Endothelial cell of umbilical vein (primary cell): ENCODE measurements at regions of chr15 and their contacts with region 1.

Region 1: GRCh38 chr15:51093839-51094605 is 684 bp downstream of the TNFAIP8L3 start:
- DNase-seq: peak; percentile 59
- H3K4me3 ChIP-seq: peak overlapping the region; percentile 75 to 95 (median 91)
- H3K27ac ChIP-seq: peak overlapping the region; percentile 61
- H3K4me1 ChIP-seq: peaks cover 78% of the 10 kb centered on the region
- H3K27me3 ChIP-seq: no peaks in the 10 kb centered on the region
- CTCF ChIP-seq: no peak
- POLR2A ChIP-seq: peak; percentile 38

Region 2: DNA sequence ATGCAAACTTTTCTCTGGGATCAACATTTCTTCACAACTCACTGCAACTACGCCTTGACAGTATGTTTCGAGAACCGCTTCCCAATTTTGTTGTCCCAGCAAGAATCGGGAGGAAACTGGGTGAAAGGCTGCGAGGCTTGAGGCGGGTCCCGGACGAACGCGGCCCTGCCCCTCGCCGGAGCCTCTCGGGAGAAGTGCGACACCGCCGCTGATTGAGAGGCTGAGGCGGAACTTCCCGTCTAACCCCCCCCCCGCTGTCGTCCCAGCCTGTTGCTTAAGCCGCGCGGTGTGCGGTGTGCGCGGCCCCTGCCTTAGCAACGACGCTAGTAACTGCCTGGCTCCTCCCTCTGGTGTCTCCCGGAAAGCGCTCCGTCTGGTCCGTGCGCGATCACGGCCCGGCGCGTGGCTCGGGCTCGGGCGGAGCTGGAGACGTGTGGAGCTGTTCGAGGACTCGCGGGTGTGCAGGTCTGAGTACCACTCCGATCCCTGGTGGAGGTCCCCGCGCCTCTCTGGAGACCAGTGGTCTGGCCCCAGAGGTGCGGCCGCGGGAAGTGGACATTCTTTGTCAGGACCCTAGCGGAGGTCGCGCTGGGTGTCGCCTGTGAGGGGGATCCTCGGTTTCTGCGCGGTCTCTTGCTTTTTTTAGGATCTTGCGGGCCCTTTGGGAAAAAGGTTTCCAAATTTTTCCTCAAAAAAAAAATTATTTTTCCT is 1473.2 kb before region 1 on chr15 and contains the starts of genes DTWD1 and FAM227B:
- CTCF ChIA-PET with region 1: no interaction called
- POLR2A ChIA-PET with region 1: no interaction called
- dilution Hi-C with region 1: no loop called
- intact Hi-C with region 1: loop called (anchors 10 kb)
- DNase-seq: peak; percentile 98
- H3K4me3 ChIP-seq: peak within 1 kb of the TSS; percentile 79 to 95 (median 91)
- H3K27ac ChIP-seq: peak within 1 kb of the TSS; percentile 64
- H3K4me1 ChIP-seq: peaks cover 11% of the 10 kb centered on the region
- H3K27me3 ChIP-seq: no peaks in the 10 kb centered on the region
- CTCF ChIP-seq: no peak
- POLR2A ChIP-seq: peak; percentile 88
- total RNA-seq, gene DTWD1: 18.7 and 20.1 TPM in 2 replicates
- total RNA-seq, gene FAM227B: 1.5 and 1.8 TPM in 2 replicates

Region 3: DNA sequence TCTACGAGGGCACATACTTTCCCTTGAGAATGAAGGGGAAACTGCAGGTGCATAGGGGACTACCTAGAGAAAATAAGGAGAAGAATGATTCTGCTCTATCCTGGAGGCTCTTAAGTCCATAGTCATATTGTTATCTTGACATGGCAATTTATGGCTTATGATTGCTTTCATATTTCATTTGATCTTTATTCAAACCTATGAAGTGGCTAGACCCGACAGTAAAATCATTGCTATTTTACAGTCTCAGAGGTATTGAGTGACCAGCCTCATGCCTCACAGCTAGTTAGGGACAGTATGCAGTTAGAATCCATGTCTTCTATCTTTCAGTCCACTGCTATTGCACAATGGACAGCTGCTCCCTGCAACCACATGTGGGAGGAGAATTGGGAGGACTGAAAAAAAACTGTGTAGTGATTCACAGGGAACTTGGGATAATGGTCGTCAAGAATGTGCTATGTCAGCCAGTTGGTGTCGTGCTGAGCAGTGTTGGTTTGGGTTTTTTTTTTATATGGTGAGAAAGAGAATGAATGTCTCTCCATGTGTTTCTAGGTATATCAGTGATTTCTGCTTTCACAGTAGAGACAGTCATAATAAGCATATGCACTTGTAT is 265.3 kb before region 1 on chr15:
- CTCF ChIA-PET with region 1: no interaction called
- POLR2A ChIA-PET with region 1: no interaction called
- dilution Hi-C with region 1: no loop called
- intact Hi-C with region 1: no loop called
- DNase-seq: no peak
- H3K4me3 ChIP-seq: no peak overlapping the region
- H3K27ac ChIP-seq: no peak overlapping the region
- H3K4me1 ChIP-seq: no peaks in the 10 kb centered on the region
- H3K27me3 ChIP-seq: peaks cover 3 to 4% of the 10 kb centered on the region in 2 experiments
- CTCF ChIP-seq: no peak
- POLR2A ChIP-seq: no peak

Region 4: GRCh38 chr15:50979041-50979440 is 115.0 kb before region 1 on chr15:
- CTCF ChIA-PET with region 1: no interaction called
- POLR2A ChIA-PET with region 1: no interaction called
- dilution Hi-C with region 1: no loop called
- intact Hi-C with region 1: no loop called
- DNase-seq: no peak
- H3K4me3 ChIP-seq: no peak overlapping the region
- H3K27ac ChIP-seq: no peak overlapping the region
- H3K4me1 ChIP-seq: no peaks in the 10 kb centered on the region
- H3K27me3 ChIP-seq: no peaks in the 10 kb centered on the region
- CTCF ChIP-seq: no peak
- POLR2A ChIP-seq: no peak

Region 5: GRCh38 chr15:51077221-51078153 is 16.5 kb before region 1 on chr15:
- CTCF ChIA-PET with region 1: interaction called, 3 read pairs
- POLR2A ChIA-PET with region 1: interaction called, 4 read pairs
- dilution Hi-C with region 1: no loop called
- intact Hi-C with region 1: loop called (anchors 1 kb)
- DNase-seq: peak; percentile 62
- H3K4me3 ChIP-seq: peak overlapping the region in 1 of 3 experiments; percentile 20
- H3K27ac ChIP-seq: peak overlapping the region; percentile 62
- H3K4me1 ChIP-seq: peaks cover 3% of the 10 kb centered on the region
- H3K27me3 ChIP-seq: no peaks in the 10 kb centered on the region
- CTCF ChIP-seq: no peak
- POLR2A ChIP-seq: peak; percentile 50

Region 6: DNA sequence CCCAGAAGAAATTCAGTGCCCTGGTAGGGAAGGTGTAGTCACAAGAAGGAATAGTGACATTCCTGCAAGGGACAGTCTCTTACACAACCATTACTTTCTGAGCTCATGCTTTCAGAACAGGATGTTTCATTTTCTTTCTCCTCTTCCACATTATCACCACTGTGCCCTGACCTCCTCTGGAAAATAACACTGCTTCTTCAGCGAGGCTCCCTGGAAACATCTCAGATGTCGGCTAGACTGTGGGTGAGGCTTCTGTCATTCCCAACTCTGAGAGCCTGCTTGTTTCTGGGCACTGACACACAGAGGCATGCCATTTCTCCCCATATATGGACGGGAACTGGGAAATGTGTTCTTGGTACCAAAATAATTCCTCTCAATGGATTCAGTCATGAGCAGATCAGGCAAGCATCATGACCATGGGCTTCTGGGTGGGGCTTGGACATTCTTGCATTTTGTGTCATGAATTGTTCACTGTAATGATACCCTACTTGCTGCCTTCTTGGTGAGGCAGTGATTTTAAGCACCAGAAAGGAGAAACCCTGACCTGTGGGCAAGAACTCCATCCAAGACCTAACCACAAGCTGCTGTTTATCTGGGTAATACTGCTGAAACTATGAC is 15.0 kb after region 1 on chr15:
- CTCF ChIA-PET with region 1: interaction called, 11 read pairs
- POLR2A ChIA-PET with region 1: interaction called, 11 read pairs
- dilution Hi-C with region 1: no loop called
- intact Hi-C with region 1: no loop called
- DNase-seq: no peak
- H3K4me3 ChIP-seq: no peak overlapping the region
- H3K27ac ChIP-seq: no peak overlapping the region
- H3K4me1 ChIP-seq: no peaks in the 10 kb centered on the region
- H3K27me3 ChIP-seq: no peaks in the 10 kb centered on the region
- CTCF ChIP-seq: no peak
- POLR2A ChIP-seq: no peak

Region 7: GRCh38 chr15:51121118-51121517 is 27.1 kb after region 1 on chr15:
- CTCF ChIA-PET with region 1: interaction called, 6 read pairs
- POLR2A ChIA-PET with region 1: interaction called, 5 read pairs
- dilution Hi-C with region 1: no loop called
- intact Hi-C with region 1: loop called (anchors 1 kb)
- DNase-seq: peak; percentile 98
- H3K4me3 ChIP-seq: no peak overlapping the region
- H3K27ac ChIP-seq: peak overlapping the region; percentile 85
- H3K4me1 ChIP-seq: peaks cover 25% of the 10 kb centered on the region
- H3K27me3 ChIP-seq: no peaks in the 10 kb centered on the region
- CTCF ChIP-seq: no peak
- POLR2A ChIP-seq: peak; percentile 54

Region 8: DNA sequence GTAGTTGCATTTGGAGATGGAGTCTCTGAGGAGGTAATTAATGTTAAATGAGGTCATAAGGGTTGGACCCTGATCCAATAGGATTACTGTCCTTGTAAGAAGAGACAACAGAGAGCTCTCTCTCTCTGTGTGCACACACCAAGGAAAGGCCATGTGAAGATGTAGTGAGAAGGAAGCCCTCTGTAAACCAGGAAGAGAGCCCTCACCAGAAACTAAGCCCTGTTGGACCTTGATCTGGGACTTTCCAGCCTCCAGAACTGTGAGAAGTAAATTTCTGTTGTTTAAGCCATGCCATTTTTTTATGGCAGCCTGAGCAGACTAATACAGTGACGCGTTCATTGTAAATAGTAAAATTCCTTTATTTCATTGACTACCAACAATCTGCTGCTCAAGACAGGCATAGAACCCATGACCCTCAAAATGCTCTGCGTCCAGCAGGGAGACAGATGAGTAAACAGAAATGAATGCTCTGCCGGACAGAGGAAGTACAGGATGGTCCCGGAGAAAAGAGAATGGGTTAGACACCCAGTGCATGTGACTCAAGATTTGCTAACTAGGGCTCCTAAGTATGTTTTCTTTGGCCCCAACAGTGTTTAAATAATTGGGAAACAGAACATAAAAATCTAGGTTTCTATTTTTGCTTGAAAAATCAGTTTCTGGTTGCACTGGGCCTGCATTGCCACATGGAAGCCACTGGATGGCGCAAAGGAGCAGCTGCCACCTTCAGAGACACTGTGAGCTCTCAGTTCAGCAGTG is 38.5 kb after region 1 on chr15:
- CTCF ChIA-PET with region 1: interaction called, 36 read pairs
- POLR2A ChIA-PET with region 1: interaction called, 6 read pairs
- dilution Hi-C with region 1: no loop called
- intact Hi-C with region 1: loop called (anchors 1 kb)
- DNase-seq: peak; percentile 97
- H3K4me3 ChIP-seq: no peak overlapping the region
- H3K27ac ChIP-seq: peak overlapping the region; percentile 91
- H3K4me1 ChIP-seq: peaks cover 26% of the 10 kb centered on the region
- H3K27me3 ChIP-seq: no peaks in the 10 kb centered on the region
- CTCF ChIP-seq: peak; percentile 95 to 99
- POLR2A ChIP-seq: peak; percentile 33